IMR-90 (cell line): ENCODE measurements at regions of chr2 and their contacts with region 1.

Region 1: DNA sequence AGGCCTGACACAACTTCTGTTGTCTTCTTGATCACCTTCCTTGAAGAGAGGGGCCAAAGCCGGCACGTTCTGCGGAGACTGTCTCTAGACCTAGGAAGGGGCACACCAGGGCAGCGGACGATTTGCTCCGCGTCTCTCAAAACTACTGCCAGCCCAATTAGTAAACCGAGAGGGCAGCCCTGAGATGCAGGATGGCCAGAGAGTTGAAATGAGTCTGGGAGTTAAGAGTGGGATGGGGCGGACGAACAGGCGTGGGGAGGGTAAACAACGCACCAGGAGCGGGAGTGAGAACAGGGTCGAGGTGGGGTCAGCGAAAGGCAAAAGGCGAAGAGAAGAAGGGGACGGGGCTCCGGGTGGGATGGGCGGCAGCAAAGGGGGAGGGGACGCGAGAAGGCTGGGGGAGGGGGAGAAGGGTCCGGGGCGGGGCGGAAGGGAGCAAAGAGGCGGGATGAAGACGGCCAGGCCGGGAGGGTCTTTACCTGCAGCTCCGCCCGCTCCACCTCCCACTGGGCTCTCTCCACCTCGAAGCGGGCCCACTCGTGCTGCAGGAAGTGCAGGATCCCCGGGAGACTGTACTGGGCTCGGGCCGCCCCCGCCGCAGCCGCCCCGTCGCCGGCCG is 476 bp downstream of the STRN start:
- DNase-seq: no peak
- ATAC-seq: peak; percentile 38
- H3K4me3 ChIP-seq: peak overlapping the region; percentile 74
- H3K27ac ChIP-seq: peak overlapping the region; percentile 79
- H3K4me1 ChIP-seq: peaks cover 3% of the 10 kb centered on the region; the same call in 1 of the 2 replicates
- H3K27me3 ChIP-seq: no peaks in the 10 kb centered on the region
- CTCF ChIP-seq: no peak
- POLR2A ChIP-seq: no peak
- RAD21 ChIP-seq: no peak

Region 2: GRCh38 chr2:36889795-36890194 is 76.1 kb before region 1 on chr2:
- CTCF ChIA-PET with region 1: no interaction called
- POLR2A ChIA-PET with region 1: no interaction called
- dilution Hi-C with region 1: no loop called
- in situ Hi-C with region 1: no loop called
- intact Hi-C with region 1: loop called (anchors 1 kb)
- DNase-seq: peak; percentile 99
- ATAC-seq: peak; percentile 97
- H3K4me3 ChIP-seq: peak overlapping the region; percentile 39; the same call in 1 of the 2 replicates
- H3K27ac ChIP-seq: peak overlapping the region; percentile 9; the same call in 1 of the 2 replicates
- H3K4me1 ChIP-seq: peaks cover 6% of the 10 kb centered on the region; the same call in 1 of the 2 replicates
- H3K27me3 ChIP-seq: no peaks in the 10 kb centered on the region
- CTCF ChIP-seq: no peak
- POLR2A ChIP-seq: no peak
- RAD21 ChIP-seq: no peak

Region 3: DNA sequence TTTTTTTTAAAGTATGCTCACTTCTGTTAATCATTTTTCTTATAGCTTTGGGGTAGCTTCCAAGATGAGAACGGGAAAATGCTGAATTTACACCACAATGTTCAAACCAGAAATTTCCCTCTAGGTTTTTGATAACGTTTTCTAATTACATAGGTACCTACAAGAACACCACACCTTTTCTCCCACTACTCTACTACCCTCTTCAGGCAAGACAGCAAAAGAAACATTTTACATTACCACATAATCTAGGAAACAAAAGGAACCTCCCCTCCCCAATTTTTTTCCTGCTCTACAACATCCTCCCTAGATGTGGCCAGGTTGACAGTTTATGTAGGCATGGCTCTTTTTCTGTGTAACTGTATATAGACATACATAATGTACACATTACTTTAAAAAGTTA is 298.0 kb after region 1 on chr2:
- CTCF ChIA-PET with region 1: no interaction called
- POLR2A ChIA-PET with region 1: no interaction called
- dilution Hi-C with region 1: no loop called
- in situ Hi-C with region 1: no loop called
- intact Hi-C with region 1: no loop called
- DNase-seq: no peak
- ATAC-seq: no peak
- H3K4me3 ChIP-seq: no peak overlapping the region
- H3K27ac ChIP-seq: no peak overlapping the region
- H3K4me1 ChIP-seq: no peaks in the 10 kb centered on the region
- H3K27me3 ChIP-seq: no peaks in the 10 kb centered on the region
- CTCF ChIP-seq: no peak
- POLR2A ChIP-seq: no peak
- RAD21 ChIP-seq: no peak